PC-3 (cell line): ENCODE measurements at regions of chr3 and their contacts with region 1.

Region 1: GRCh38 chr3:173553635-173554280 is 156.2 kb downstream of the NLGN1 start:
- DNase-seq: peak; percentile 61
- ATAC-seq: peak; percentile 79
- H3K4me3 ChIP-seq: no peak overlapping the region
- H3K27ac ChIP-seq: no peak overlapping the region
- H3K4me1 ChIP-seq: no peaks in the 10 kb centered on the region
- H3K27me3 ChIP-seq: no peaks in the 10 kb centered on the region
- CTCF ChIP-seq: peak; percentile 82

Region 2: GRCh38 chr3:173371848-173372487 is 181.8 kb before region 1 on chr3:
- CTCF ChIA-PET with region 1: no interaction called
- POLR2A ChIA-PET with region 1: no interaction called
- intact Hi-C with region 1: loop called (anchors 1 kb)
- DNase-seq: peak; percentile 59
- ATAC-seq: peak; percentile 71
- H3K4me3 ChIP-seq: no peak overlapping the region
- H3K27ac ChIP-seq: no peak overlapping the region
- H3K4me1 ChIP-seq: no peaks in the 10 kb centered on the region
- H3K27me3 ChIP-seq: peaks cover 21% of the 10 kb centered on the region; the same call in 1 of the 2 replicates
- CTCF ChIP-seq: peak; percentile 74

Region 3: GRCh38 chr3:173411375-173411973 is 142.3 kb before region 1 on chr3:
- CTCF ChIA-PET with region 1: no interaction called
- POLR2A ChIA-PET with region 1: no interaction called
- intact Hi-C with region 1: loop called (anchors 1 kb)
- DNase-seq: peak; percentile 61
- ATAC-seq: peak; percentile 76
- H3K4me3 ChIP-seq: no peak overlapping the region
- H3K27ac ChIP-seq: no peak overlapping the region
- H3K4me1 ChIP-seq: no peaks in the 10 kb centered on the region
- H3K27me3 ChIP-seq: peaks cover 26% of the 10 kb centered on the region; the same call in 1 of the 2 replicates
- CTCF ChIP-seq: peak; percentile 72

Region 4: DNA sequence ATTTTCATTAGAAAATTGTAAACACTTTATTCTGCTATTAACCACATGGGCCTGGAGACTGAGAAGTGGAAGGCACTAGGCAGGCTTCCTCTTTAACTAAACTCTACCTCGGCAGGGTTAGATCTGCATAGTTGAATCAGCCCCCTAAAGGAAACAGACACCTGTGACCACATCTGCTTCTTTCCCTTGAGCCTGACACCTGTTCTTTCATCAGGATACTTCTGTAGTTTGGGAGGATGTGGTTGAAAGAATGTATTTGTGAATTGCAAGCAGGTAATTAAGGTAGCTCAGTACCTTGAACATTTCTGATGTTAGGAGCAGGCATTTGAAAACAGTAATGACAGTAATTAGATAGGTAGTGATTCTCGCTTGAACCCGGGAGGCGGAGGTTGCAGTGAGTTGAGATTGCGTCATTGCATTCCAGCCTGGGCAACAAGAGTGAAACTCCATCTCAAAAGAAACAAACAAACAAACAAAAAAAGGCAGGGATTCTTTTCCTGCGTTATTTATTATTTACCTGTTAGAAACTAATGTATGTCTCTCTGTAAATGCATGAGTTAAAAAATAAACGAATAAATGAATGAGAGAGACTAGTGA is 312.2 kb after region 1 on chr3:
- CTCF ChIA-PET with region 1: no interaction called
- POLR2A ChIA-PET with region 1: no interaction called
- intact Hi-C with region 1: no loop called
- DNase-seq: no peak
- ATAC-seq: no peak
- H3K4me3 ChIP-seq: no peak overlapping the region
- H3K27ac ChIP-seq: no peak overlapping the region
- H3K4me1 ChIP-seq: no peaks in the 10 kb centered on the region
- H3K27me3 ChIP-seq: no peaks in the 10 kb centered on the region
- CTCF ChIP-seq: no peak